Naive thymus-derived CD4-positive, alpha-beta T cell (primary cell): ENCODE measurements at regions of chr6 and their contacts with region 1.

Region 1: DNA sequence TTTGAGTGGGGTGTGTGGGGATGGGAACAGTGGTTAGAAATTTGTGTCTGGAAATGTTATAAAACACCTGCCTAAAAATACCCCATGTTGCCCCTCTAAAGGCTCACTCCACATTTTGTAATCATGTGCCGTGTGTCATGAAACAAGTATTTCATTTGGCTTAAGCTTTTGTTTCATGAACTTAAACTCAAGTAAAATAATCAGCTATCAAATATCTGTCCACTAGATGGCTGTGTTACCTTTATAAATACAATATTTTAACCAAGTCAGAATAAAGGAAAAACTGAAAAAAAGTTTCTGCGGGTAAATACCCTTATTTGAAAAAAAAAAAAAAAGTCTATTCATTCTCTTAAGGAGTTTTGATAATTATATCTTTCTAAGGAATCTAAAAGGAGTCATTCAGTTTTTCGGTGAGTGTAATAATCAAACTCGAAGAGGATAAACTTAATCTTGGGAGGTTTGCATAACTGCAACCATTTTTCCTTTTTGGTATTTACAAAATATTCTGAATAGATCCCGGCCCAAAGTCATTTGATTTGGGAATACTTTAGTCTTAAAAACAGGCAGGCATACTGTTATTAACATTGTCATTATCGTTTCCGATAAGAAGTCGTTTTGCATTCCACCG is 29.9 kb upstream of the MTRF1L start:
- DNase-seq: peak in 1 of 9 donors; percentile 8
- ATAC-seq: no peak
- H3K4me3 ChIP-seq: no peak overlapping the region
- H3K4me3 Mint-ChIP-seq: no peak overlapping the region
- H3K27ac ChIP-seq: no peak overlapping the region
- H3K27ac Mint-ChIP-seq: no peak overlapping the region
- H3K4me1 ChIP-seq: no peaks in the 10 kb centered on the region
- H3K4me1 Mint-ChIP-seq: no peaks in the 10 kb centered on the region
- H3K27me3 ChIP-seq: no peaks in the 10 kb centered on the region
- H3K27me3 Mint-ChIP-seq: peaks cover 8 to 32% (median 15%) of the 10 kb centered on the region in 5 donors

Region 2: GRCh38 chr6:153312641-153313040 is 280.3 kb after region 1 on chr6:
- CTCF ChIA-PET with region 1: no interaction called
- POLR2A ChIA-PET with region 1: no interaction called
- intact Hi-C with region 1: loop called in 1 of 2 experiments (anchors 2 kb)
- DNase-seq: peak in 3 of 9 donors; percentile 2 to 36 (median 13)
- ATAC-seq: peak; percentile 45
- H3K4me3 ChIP-seq: no peak overlapping the region
- H3K4me3 Mint-ChIP-seq: no peak overlapping the region
- H3K27ac ChIP-seq: no peak overlapping the region
- H3K27ac Mint-ChIP-seq: no peak overlapping the region
- H3K4me1 ChIP-seq: no peaks in the 10 kb centered on the region
- H3K4me1 Mint-ChIP-seq: peaks cover 0 to 7% (median 0%) of the 10 kb centered on the region in 7 donors
- H3K27me3 ChIP-seq: no peaks in the 10 kb centered on the region
- H3K27me3 Mint-ChIP-seq: peaks cover 0 to 8% (median 4%) of the 10 kb centered on the region in 5 donors

Region 3: DNA sequence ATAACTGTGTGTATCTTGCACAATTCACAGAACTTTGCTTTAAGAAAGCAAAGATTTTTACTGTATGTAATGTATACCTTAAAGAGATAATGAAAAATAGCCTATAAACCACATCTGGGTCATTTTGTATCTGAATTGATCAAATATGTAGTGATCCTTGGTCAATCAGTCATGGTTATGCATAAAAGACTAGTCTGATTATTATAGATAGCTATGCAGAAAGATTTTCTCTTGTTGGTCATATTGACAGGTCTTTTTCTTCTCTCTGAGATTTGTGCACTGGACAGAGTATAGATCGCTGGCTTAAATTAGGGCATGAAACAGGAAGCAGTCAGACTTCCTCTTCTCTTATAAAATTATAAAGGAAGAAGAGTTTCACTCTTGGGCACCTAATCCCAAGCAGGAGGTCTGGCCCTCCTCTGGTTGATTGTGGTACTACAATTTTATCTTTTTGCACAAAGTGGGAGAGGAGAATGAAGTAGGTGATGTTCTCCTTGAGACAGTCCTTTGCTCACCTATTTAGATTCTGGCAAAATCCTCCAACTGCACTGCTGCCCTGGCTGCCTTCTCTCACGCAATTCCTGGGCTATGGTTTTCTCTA is 479.6 kb after region 1 on chr6:
- CTCF ChIA-PET with region 1: no interaction called
- POLR2A ChIA-PET with region 1: no interaction called
- intact Hi-C with region 1: loop called in 1 of 2 experiments (anchors 2 kb)
- DNase-seq: peak in 5 of 9 donors; percentile 1 to 27 (median 16)
- ATAC-seq: peak; percentile 49
- H3K4me3 ChIP-seq: no peak overlapping the region
- H3K4me3 Mint-ChIP-seq: peak overlapping the region in 1 of 10 donors; percentile 24
- H3K27ac ChIP-seq: no peak overlapping the region
- H3K27ac Mint-ChIP-seq: peak overlapping the region in 1 of 9 donors; percentile 49
- H3K4me1 ChIP-seq: no peaks in the 10 kb centered on the region
- H3K4me1 Mint-ChIP-seq: peaks cover 0 to 7% (median 2%) of the 10 kb centered on the region in 7 donors
- H3K27me3 ChIP-seq: no peaks in the 10 kb centered on the region
- H3K27me3 Mint-ChIP-seq: no peaks in the 10 kb centered on the region

Region 4: DNA sequence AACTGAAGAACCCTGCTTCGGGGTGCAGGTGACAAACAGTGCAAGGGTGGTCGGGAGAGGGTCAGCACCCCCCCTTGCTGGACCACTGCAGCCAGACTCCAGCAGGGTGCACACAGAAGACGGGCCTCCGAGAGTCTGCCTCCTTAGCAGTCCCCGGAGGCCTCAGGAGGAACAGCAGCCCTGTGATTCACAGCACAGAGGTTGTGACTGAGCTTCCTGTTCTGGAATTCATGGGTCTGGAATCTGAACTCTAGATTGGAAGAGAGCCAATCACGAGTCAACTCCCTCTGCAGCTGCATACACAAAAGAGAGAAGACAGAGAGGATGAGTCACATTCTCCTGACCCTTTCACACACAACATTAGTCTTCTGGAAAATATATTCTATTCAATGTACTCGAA is 757.7 kb after region 1 on chr6:
- CTCF ChIA-PET with region 1: no interaction called
- POLR2A ChIA-PET with region 1: no interaction called
- intact Hi-C with region 1: loop called in 1 of 2 experiments (anchors 5 kb)
- DNase-seq: no peak
- ATAC-seq: no peak
- H3K4me3 ChIP-seq: no peak overlapping the region
- H3K4me3 Mint-ChIP-seq: no peak overlapping the region
- H3K27ac ChIP-seq: no peak overlapping the region
- H3K27ac Mint-ChIP-seq: no peak overlapping the region
- H3K4me1 ChIP-seq: no peaks in the 10 kb centered on the region
- H3K4me1 Mint-ChIP-seq: no peaks in the 10 kb centered on the region
- H3K27me3 ChIP-seq: no peaks in the 10 kb centered on the region
- H3K27me3 Mint-ChIP-seq: peaks cover 0 to 10% (median 0%) of the 10 kb centered on the region in 5 donors

Region 5: DNA sequence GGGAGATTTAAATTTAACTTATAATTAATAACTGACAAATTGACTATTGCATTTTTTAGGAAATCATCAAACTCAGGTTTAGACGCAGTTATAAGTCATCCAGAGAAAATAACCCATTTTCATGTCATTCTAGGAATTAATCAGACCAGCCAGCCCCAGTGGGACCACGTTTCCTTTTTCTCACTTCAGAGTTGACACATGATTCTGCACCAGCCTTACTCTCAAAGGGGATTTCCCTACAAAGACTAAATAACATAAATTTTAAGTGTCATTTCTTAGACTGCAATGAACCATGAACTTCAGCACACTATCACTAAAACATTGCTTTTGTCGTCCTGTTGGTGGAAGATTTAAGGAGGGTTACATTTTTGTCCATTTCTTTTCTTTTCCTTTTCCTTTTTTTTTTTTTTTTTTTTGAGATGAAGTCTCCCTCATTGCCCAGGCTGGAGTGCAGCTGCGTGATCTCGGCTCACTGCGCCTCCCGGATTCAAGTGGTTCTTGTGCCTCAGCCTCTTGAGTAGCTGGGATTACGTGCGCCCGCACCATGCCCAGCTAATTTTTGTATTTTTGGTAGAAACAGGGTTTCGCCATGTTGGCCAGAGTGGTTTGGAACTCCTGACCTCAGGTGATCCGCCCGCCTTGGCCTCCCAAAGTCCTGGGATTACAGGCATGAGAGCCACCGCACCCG is 1320.7 kb after region 1 on chr6:
- CTCF ChIA-PET with region 1: no interaction called
- POLR2A ChIA-PET with region 1: no interaction called
- intact Hi-C with region 1: no loop called
- DNase-seq: peak in 1 of 9 donors; percentile 26
- ATAC-seq: peak; percentile 50
- H3K4me3 ChIP-seq: no peak overlapping the region
- H3K4me3 Mint-ChIP-seq: no peak overlapping the region
- H3K27ac ChIP-seq: no peak overlapping the region
- H3K27ac Mint-ChIP-seq: no peak overlapping the region
- H3K4me1 ChIP-seq: no peaks in the 10 kb centered on the region
- H3K4me1 Mint-ChIP-seq: peaks cover 7 to 25% (median 10%) of the 10 kb centered on the region in 7 donors
- H3K27me3 ChIP-seq: no peaks in the 10 kb centered on the region
- H3K27me3 Mint-ChIP-seq: peaks cover 0 to 23% (median 0%) of the 10 kb centered on the region in 5 donors